BJ (cell line): ENCODE measurements at regions of chr5 and their contacts with region 1.

Region 1: DNA sequence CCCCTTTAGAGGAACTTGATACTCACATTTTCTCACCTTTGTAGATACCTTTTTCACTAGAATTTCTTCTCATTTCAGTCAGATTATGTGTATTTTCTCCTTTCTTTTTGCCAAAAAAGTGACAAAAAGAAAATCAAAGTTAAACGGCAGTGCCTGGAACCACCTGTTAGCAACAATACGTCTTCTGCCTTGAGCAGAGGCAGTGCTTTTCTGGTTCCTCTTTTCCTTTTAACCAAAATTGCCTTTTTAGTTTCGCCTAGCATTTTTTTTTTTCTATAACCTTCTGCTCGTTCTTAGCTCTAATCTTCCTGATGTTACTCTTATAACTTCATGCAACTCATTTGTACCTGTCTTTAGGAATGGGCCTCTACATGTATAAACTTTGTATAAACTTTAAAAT is 26.1 kb downstream of the SMIM32 start:
- DNase-seq: no peak
- H3K4me3 ChIP-seq: no peak overlapping the region
- H3K27me3 ChIP-seq: no peaks in the 10 kb centered on the region
- CTCF ChIP-seq: no peak

Region 2: GRCh38 chr5:135718151-135718550 is 448.8 kb before region 1 on chr5:
- CTCF ChIA-PET with region 1: no interaction called
- POLR2A ChIA-PET with region 1: no interaction called
- DNase-seq: no peak
- H3K4me3 ChIP-seq: no peak overlapping the region
- H3K27me3 ChIP-seq: 0 out of 2 replicates have a peak, but pooled peaks cover 2% of the 10 kb centered on the region
- CTCF ChIP-seq: no peak

Region 3: GRCh38 chr5:135834639-135835529 is 332.0 kb before region 1 on chr5 and contains the start of gene SLC25A48:
- CTCF ChIA-PET with region 1: no interaction called
- POLR2A ChIA-PET with region 1: no interaction called
- DNase-seq: no peak
- H3K4me3 ChIP-seq: no peak within 1 kb of the TSS
- H3K27me3 ChIP-seq: peaks cover 16% of the 10 kb centered on the region
- CTCF ChIP-seq: 0 out of 2 replicates have a peak, but pooled peaks have one; percentile 1
- polyA plus RNA-seq, gene SLC25A48: not detected in 2 replicates

Region 4: GRCh38 chr5:136135536-136135935 is 31.4 kb before region 1 on chr5:
- CTCF ChIA-PET with region 1: no interaction called
- POLR2A ChIA-PET with region 1: interaction called, 12 read pairs
- DNase-seq: no peak
- H3K4me3 ChIP-seq: no peak overlapping the region
- H3K27me3 ChIP-seq: no peaks in the 10 kb centered on the region
- CTCF ChIP-seq: no peak

Region 5: GRCh38 chr5:136332223-136333015 is 165.5 kb after region 1 on chr5:
- CTCF ChIA-PET with region 1: no interaction called
- POLR2A ChIA-PET with region 1: no interaction called
- DNase-seq: no peak
- H3K4me3 ChIP-seq: no peak overlapping the region
- H3K27me3 ChIP-seq: no peaks in the 10 kb centered on the region
- CTCF ChIP-seq: no peak